Caco-2 (cell line): ENCODE measurements at regions of chr2 and their contacts with region 1.

Region 1: DNA sequence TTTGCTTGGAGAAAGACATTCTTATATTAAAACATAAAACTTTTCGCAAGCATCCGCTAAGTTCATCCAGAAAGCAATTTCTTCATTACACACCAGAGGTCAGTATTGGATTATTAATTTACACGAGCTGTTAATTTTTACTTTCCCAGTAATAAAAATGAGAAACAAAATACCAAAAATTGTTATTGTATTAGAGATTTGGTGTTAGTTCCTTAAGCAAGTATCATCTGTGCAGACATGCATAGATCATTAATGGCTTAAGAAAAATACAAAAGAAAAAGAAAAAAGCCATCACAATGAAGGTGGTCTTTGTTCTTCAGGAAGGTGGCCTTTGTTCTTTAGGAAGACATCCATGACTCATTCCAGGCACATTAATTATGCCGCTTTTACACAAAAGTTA is 53.6 kb upstream of the HNMT start:
- DNase-seq: peak in 1 of 2 experiments; percentile 26
- H3K4me3 ChIP-seq: no peak overlapping the region
- H3K4me3 Mint-ChIP-seq: no peak overlapping the region
- H3K27ac Mint-ChIP-seq: no peak overlapping the region
- H3K4me1 ChIP-seq: no peaks in the 10 kb centered on the region
- H3K4me1 Mint-ChIP-seq: peaks cover 14% of the 10 kb centered on the region
- H3K27me3 ChIP-seq: no peaks in the 10 kb centered on the region
- H3K27me3 Mint-ChIP-seq: no peaks in the 10 kb centered on the region
- CTCF ChIP-seq: peak; percentile 52 to 74

Region 2: DNA sequence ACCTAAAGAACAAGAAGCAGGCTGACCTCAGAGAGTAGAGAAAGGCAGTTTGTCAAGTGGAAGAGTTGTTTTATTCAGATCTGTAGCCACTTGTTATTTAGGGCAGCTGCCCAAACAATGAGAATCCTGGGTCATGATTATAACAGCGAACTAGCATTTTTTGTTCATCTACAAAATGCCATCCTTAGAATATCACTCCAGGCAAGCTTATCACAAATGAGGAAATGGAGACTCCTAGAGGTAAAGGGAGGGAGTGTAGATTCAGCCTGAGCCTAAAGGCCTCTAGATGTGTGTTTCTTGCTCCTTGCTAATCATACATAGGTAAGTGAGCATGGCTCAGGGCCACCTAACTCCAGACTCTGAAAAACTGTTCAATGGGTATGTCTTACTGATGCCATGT is 179.7 kb after region 1 on chr2:
- CTCF ChIA-PET with region 1: interaction called, 4 read pairs
- POLR2A ChIA-PET with region 1: no interaction called
- intact Hi-C with region 1: loop called (anchors 1 kb)
- DNase-seq: peak in 1 of 2 experiments; percentile 36
- H3K4me3 ChIP-seq: no peak overlapping the region
- H3K4me3 Mint-ChIP-seq: no peak overlapping the region
- H3K27ac Mint-ChIP-seq: peak overlapping the region; percentile 11
- H3K4me1 ChIP-seq: peaks cover 10% of the 10 kb centered on the region
- H3K4me1 Mint-ChIP-seq: no peaks in the 10 kb centered on the region
- H3K27me3 ChIP-seq: no peaks in the 10 kb centered on the region
- H3K27me3 Mint-ChIP-seq: no peaks in the 10 kb centered on the region
- CTCF ChIP-seq: peak in 1 of 2 experiments; percentile 42

Region 3: DNA sequence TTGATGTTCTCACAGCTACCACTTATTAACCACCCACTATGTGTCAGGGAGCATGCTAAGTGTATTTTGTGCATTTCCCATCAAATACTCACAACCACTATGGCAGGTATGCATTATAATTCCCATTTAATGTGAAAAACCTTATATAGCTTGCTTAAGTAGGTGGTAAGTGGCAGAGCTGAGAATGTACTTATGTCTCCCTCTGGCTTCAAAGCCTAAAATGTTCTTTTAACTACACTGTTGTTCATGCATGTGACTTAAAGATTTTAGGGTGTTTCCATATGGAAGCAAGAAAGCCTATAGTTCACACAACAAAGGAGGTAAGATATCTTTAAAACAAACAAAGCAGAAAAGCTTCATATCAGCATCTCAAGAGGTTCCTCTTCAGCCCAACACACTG is 281.5 kb after region 1 on chr2:
- CTCF ChIA-PET with region 1: no interaction called
- POLR2A ChIA-PET with region 1: no interaction called
- intact Hi-C with region 1: loop called (anchors 5 kb)
- DNase-seq: no peak
- H3K4me3 ChIP-seq: no peak overlapping the region
- H3K4me3 Mint-ChIP-seq: no peak overlapping the region
- H3K27ac Mint-ChIP-seq: no peak overlapping the region
- H3K4me1 ChIP-seq: peaks cover 19% of the 10 kb centered on the region
- H3K4me1 Mint-ChIP-seq: peaks cover 21% of the 10 kb centered on the region
- H3K27me3 ChIP-seq: no peaks in the 10 kb centered on the region
- H3K27me3 Mint-ChIP-seq: no peaks in the 10 kb centered on the region
- CTCF ChIP-seq: no peak

Region 4: DNA sequence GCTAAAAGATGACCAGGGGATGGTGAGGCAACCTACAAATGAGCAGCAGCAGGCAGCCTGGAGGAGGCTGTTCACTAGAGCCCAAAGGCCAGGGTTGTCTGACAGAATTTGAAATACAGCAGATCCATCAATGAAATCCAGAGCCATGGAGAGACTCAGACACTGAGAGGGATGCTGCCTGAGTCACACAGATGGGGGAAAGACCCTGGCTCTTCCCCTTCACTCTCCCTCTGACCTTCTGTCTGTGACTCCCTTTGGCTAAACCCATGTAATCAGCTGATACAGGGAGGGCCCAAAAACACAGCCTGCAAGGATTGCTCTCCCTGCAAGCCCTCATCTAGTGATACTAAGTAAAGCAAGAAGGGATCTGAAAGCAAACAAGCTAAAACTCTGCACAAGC is 424.4 kb after region 1 on chr2:
- CTCF ChIA-PET with region 1: interaction called, 10 read pairs
- POLR2A ChIA-PET with region 1: no interaction called
- intact Hi-C with region 1: no loop called
- DNase-seq: no peak
- H3K4me3 ChIP-seq: no peak overlapping the region
- H3K4me3 Mint-ChIP-seq: no peak overlapping the region
- H3K27ac Mint-ChIP-seq: no peak overlapping the region
- H3K4me1 ChIP-seq: no peaks in the 10 kb centered on the region
- H3K4me1 Mint-ChIP-seq: peaks cover 6% of the 10 kb centered on the region
- H3K27me3 ChIP-seq: no peaks in the 10 kb centered on the region
- H3K27me3 Mint-ChIP-seq: no peaks in the 10 kb centered on the region
- CTCF ChIP-seq: no peak

Region 5: DNA sequence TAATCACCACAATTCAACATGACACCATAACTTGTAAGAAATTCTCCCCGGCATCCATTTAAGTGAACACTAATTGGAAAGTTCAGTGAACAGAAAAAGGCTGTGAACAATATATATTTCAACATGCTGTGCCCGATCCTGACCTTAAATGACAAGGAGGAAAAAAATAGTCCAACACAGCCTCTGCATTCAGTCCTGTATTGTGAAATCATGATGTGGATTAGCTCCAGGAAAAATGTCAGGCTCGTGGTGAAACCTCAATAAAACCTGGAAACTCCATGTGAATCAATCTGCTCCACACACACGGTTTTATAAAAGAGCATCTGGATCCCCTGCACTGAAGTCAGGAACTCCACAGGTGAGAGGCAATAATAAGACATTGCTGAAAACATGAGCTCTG is 445.5 kb after region 1 on chr2:
- CTCF ChIA-PET with region 1: no interaction called
- POLR2A ChIA-PET with region 1: no interaction called
- intact Hi-C with region 1: loop called (anchors 5 kb)
- DNase-seq: no peak
- H3K4me3 ChIP-seq: no peak overlapping the region
- H3K4me3 Mint-ChIP-seq: no peak overlapping the region
- H3K27ac Mint-ChIP-seq: no peak overlapping the region
- H3K4me1 ChIP-seq: no peaks in the 10 kb centered on the region
- H3K4me1 Mint-ChIP-seq: no peaks in the 10 kb centered on the region
- H3K27me3 ChIP-seq: no peaks in the 10 kb centered on the region
- H3K27me3 Mint-ChIP-seq: no peaks in the 10 kb centered on the region
- CTCF ChIP-seq: no peak

Region 6: GRCh38 chr2:138373993-138374408 is 463.4 kb after region 1 on chr2:
- CTCF ChIA-PET with region 1: no interaction called
- POLR2A ChIA-PET with region 1: no interaction called
- intact Hi-C with region 1: loop called (anchors 1 kb)
- DNase-seq: peak in 1 of 2 experiments; percentile 43
- H3K4me3 ChIP-seq: no peak overlapping the region
- H3K4me3 Mint-ChIP-seq: no peak overlapping the region
- H3K27ac Mint-ChIP-seq: no peak overlapping the region
- H3K4me1 ChIP-seq: no peaks in the 10 kb centered on the region
- H3K4me1 Mint-ChIP-seq: peaks cover 6% of the 10 kb centered on the region
- H3K27me3 ChIP-seq: no peaks in the 10 kb centered on the region
- H3K27me3 Mint-ChIP-seq: no peaks in the 10 kb centered on the region
- CTCF ChIP-seq: peak; percentile 75 to 80

Region 7: DNA sequence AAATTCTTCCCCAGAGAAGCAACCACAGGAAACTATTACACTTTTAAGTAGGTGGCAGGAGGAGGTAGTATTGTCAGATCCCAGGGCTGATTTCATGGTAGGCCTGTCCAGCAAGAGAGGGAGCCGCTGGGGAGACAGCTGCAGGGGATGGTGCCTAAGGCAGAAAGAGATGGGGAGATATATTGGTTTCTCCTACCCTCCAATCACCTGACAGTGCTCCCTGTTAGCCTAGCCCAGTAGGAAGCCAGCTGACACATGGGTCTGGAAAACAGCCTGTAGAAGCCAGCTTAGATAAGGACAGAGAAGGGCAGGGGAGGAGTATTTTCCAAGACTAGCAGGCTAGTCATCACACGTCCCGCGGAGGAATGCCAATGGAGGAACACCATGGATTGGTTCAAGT is 582.7 kb after region 1 on chr2:
- CTCF ChIA-PET with region 1: no interaction called
- POLR2A ChIA-PET with region 1: no interaction called
- intact Hi-C with region 1: loop called (anchors 10 kb)
- DNase-seq: peak in 1 of 2 experiments; percentile 74
- H3K4me3 ChIP-seq: no peak overlapping the region
- H3K4me3 Mint-ChIP-seq: no peak overlapping the region
- H3K27ac Mint-ChIP-seq: peak overlapping the region; percentile 76
- H3K4me1 ChIP-seq: peaks cover 70% of the 10 kb centered on the region
- H3K4me1 Mint-ChIP-seq: peaks cover 39% of the 10 kb centered on the region
- H3K27me3 ChIP-seq: no peaks in the 10 kb centered on the region
- H3K27me3 Mint-ChIP-seq: no peaks in the 10 kb centered on the region
- CTCF ChIP-seq: no peak